ENCODE measurements at regions of chr16 and their contacts with region 1.

Region 1: DNA sequence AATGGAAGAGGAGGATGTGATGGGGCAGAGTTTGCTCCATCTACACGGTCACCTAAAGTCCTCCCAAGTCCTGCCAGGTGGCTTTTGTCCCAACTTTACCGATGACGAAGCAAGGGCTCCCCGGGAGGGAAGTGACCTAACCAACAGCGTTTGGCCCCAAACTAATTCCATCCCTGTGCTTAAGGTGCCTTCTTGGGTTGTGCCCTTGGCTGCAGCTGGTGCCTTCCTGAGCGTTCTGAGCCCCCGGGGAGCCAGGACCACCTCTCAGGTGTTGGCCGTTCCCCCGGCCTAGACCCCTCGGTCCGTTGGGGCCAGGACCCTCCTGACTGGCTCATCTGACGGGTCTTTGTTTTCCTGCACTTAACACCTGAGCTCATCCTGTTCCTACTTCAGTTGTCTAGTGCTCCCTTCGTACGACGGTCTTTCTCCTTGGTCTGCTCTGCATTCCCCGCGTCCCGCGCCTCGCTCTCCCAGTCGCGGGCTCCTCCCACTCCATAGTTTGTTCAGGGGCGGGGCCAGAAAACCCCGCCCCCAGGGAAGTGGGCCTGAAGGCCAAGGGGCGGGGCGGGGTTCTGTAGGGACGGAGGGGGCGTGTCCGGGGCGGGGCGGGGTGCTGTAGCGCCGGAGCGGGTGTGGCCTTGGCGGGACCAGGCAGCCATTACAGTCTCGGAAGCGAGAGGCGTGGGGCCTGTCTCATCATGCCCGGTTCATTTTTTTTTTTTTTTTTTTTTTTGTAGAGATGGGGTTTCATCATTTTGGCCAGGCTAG is 822 bp upstream of the ZSCAN10 start:
- DNase-seq: peak; percentile 86 to 96
- H3K4me3 ChIP-seq: peak overlapping the region; percentile 67 to 96 (median 88)
- H3K27ac ChIP-seq: peak overlapping the region; percentile 93
- H3K4me1 ChIP-seq: peaks cover 14 to 30% (median 16%) of the 10 kb centered on the region in 4 experiments
- H3K27me3 ChIP-seq: no peaks in the 10 kb centered on the region
- CTCF ChIP-seq: no peak
- EP300 ChIP-seq: no peak
- POLR2A ChIP-seq: peak; percentile 84 to 87
- RAD21 ChIP-seq: no peak

Region 2: GRCh38 chr16:2115591-2115973 is 984.3 kb before region 1 on chr16:
- CTCF ChIA-PET with region 1: no interaction called
- POLR2A ChIA-PET with region 1: no interaction called
- DNase-seq: no peak
- H3K4me3 ChIP-seq: no peak overlapping the region
- H3K27ac ChIP-seq: no peak overlapping the region
- H3K4me1 ChIP-seq: no peaks in the 10 kb centered on the region
- H3K27me3 ChIP-seq: no peaks in the 10 kb centered on the region
- CTCF ChIP-seq: no peak
- EP300 ChIP-seq: no peak
- POLR2A ChIP-seq: no peak
- RAD21 ChIP-seq: no peak

Region 3: GRCh38 chr16:3003582-3004302 is 96.2 kb before region 1 on chr16:
- CTCF ChIA-PET with region 1: no interaction called
- POLR2A ChIA-PET with region 1: interaction called, 26 read pairs
- DNase-seq: peak; percentile 95 to 98
- H3K4me3 ChIP-seq: peak overlapping the region in 1 of 4 experiments; percentile 58; a peak in 1 of 8 replicates
- H3K27ac ChIP-seq: no peak overlapping the region
- H3K4me1 ChIP-seq: peaks cover 11 to 33% (median 27%) of the 10 kb centered on the region in 4 experiments
- H3K27me3 ChIP-seq: no peaks in the 10 kb centered on the region
- CTCF ChIP-seq: peak; percentile 63 to 93 (median 71)
- EP300 ChIP-seq: peak in 1 of 2 experiments; percentile 36; a peak in 1 of 3 replicates
- POLR2A ChIP-seq: 0 out of 3 replicates have a peak, but pooled peaks of 1 of the 2 experiments have one; percentile 32
- RAD21 ChIP-seq: peak; percentile 85 to 92

Region 4: DNA sequence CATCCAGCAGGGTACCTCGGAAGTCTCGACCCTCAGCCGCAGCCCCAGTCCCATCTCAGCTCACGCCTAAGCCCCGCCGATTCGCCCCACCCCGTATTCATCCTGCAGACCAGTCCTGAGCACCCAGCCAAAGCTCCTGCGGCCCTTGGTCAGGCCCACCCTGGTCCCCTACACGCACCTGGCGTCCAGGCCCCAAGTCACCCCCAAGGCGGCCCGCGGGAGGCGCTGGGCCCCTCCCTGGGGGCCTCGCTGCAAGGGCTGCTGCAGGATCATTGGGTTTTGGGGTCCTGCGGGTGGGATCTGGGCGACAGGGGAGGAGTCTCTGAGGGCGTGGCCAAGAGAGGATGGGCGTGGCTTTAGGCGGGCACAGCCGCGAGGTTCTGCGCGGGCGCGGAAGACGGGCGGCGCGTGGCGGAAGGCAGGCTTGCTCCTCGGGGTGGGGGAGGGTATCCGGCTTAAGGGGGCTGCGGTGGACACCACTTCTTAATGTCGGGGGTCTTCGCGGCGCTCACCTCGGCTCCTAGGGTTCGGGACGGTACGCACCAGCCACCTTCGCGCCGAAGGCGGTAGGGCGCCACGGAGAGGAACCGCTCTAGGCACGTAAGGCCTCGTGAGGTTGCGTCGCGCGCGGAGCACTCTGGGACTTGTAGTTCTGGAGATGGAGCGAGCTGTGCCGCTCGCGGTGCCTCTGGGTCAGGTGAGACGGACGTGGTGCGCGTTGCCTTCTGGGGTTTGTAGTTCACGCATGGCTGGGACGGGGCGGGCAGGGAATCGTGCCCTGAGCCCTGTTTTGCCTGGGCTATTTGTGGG is 76.0 kb before region 1 on chr16 and contains the starts of genes HCFC1R1 and THOC6:
- CTCF ChIA-PET with region 1: interaction called, 8 read pairs
- POLR2A ChIA-PET with region 1: interaction called, 76 read pairs
- DNase-seq: peak; percentile 97 to 98
- H3K4me3 ChIP-seq: peak within 1 kb of the TSS; percentile 39 to 97 (median 94)
- H3K27ac ChIP-seq: peak within 1 kb of the TSS; percentile 94
- H3K4me1 ChIP-seq: peaks cover 0 to 23% (median 20%) of the 10 kb centered on the region in 4 experiments; a peak in 6 of 7 replicates
- H3K27me3 ChIP-seq: no peaks in the 10 kb centered on the region
- CTCF ChIP-seq: no peak
- EP300 ChIP-seq: no peak
- POLR2A ChIP-seq: peak; percentile 86 to 89
- RAD21 ChIP-seq: peak in 1 of 2 experiments; percentile 2; a peak in 2 of 4 replicates
- total RNA-seq, gene HCFC1R1: 66.2 and 72.7 TPM in 2 replicates
- total RNA-seq, gene THOC6: 78.5 and 82.9 TPM in 2 replicates

Region 5: GRCh38 chr16:3045357-3045728 is 54.6 kb before region 1 on chr16:
- CTCF ChIA-PET with region 1: interaction called, 3 read pairs
- POLR2A ChIA-PET with region 1: interaction called, 37 read pairs
- DNase-seq: peak in 1 of 2 experiments; percentile 73
- H3K4me3 ChIP-seq: peak overlapping the region; percentile 66 to 89 (median 80)
- H3K27ac ChIP-seq: no peak overlapping the region; the same call in 1 of the 2 replicates
- H3K4me1 ChIP-seq: peaks cover 0 to 3% (median 0%) of the 10 kb centered on the region in 4 experiments; a peak in 3 of 7 replicates
- H3K27me3 ChIP-seq: peaks cover 0 to 8% (median 3%) of the 10 kb centered on the region in 4 experiments; a peak in 6 of 7 replicates
- CTCF ChIP-seq: no peak
- EP300 ChIP-seq: no peak
- POLR2A ChIP-seq: no peak
- RAD21 ChIP-seq: no peak

Region 6: DNA sequence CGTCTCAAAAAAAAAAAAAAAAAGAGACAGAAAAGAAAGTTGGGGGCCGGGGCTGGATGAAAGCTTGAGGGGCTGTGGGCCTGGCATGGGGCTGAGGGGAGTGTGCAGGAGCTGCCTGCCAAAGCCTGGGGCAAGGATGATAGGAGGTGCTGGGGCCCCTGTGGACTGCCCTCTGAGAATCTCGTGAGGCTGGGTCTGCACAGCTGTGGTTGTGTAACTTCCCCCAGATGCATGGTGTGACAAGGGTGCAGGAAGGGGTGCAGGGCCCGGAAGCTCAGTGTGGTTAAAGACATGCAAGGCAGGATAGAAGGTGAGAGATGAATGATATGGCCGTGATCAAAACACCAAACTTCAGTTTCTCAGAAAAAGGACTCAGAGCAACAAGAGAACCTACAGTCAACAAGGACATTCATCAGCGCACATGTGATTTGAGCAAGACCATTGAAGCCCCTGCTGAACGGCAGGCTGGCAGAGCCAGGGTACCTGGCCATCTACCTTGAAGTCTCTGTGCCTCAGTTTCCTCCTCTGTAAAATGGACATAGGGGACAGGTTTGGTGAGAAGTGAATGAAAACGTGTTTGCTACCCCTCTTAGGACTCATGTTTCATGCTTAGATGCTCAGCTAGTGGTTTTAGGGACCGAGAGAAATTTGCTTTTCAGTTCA is 24.9 kb before region 1 on chr16:
- CTCF ChIA-PET with region 1: interaction called, 13 read pairs
- POLR2A ChIA-PET with region 1: interaction called, 47 read pairs
- DNase-seq: no peak
- H3K4me3 ChIP-seq: no peak overlapping the region
- H3K27ac ChIP-seq: no peak overlapping the region
- H3K4me1 ChIP-seq: peaks cover 0 to 2% (median 0%) of the 10 kb centered on the region in 4 experiments; a peak in 2 of 7 replicates
- H3K27me3 ChIP-seq: no peaks in the 10 kb centered on the region; a peak in 1 of 7 replicates
- CTCF ChIP-seq: no peak
- EP300 ChIP-seq: no peak
- POLR2A ChIP-seq: no peak
- RAD21 ChIP-seq: no peak

Region 7: GRCh38 chr16:3123986-3124886 is 24.3 kb after region 1 on chr16:
- CTCF ChIA-PET with region 1: interaction called, 619 read pairs
- POLR2A ChIA-PET with region 1: interaction called, 168 read pairs
- DNase-seq: peak; percentile 87 to 98
- H3K4me3 ChIP-seq: peak overlapping the region; percentile 43 to 76 (median 67)
- H3K27ac ChIP-seq: no peak overlapping the region
- H3K4me1 ChIP-seq: peaks cover 0 to 11% (median 4%) of the 10 kb centered on the region in 4 experiments; a peak in 5 of 7 replicates
- H3K27me3 ChIP-seq: no peaks in the 10 kb centered on the region
- CTCF ChIP-seq: peak; percentile 10 to 16 (median 11); a peak in 3 of 4 replicates
- EP300 ChIP-seq: no peak
- POLR2A ChIP-seq: peak in 1 of 2 experiments; percentile 71; a peak in 1 of 3 replicates
- RAD21 ChIP-seq: peak in 1 of 2 experiments; percentile 21; a peak in 1 of 4 replicates

Region 8: GRCh38 chr16:3173892-3174617 is 74.1 kb after region 1 on chr16:
- CTCF ChIA-PET with region 1: no interaction called
- POLR2A ChIA-PET with region 1: interaction called, 15 read pairs
- DNase-seq: peak in 1 of 2 experiments; percentile 95
- H3K4me3 ChIP-seq: peak overlapping the region; percentile 28 to 71 (median 34); a peak in 5 of 8 replicates
- H3K27ac ChIP-seq: no peak overlapping the region
- H3K4me1 ChIP-seq: peaks cover 0 to 10% (median 6%) of the 10 kb centered on the region in 4 experiments; a peak in 5 of 7 replicates
- H3K27me3 ChIP-seq: peaks cover 0 to 25% (median 15%) of the 10 kb centered on the region in 4 experiments; a peak in 5 of 7 replicates
- CTCF ChIP-seq: peak; percentile 63 to 75 (median 72)
- EP300 ChIP-seq: no peak
- POLR2A ChIP-seq: no peak
- RAD21 ChIP-seq: no peak; a peak in 1 of 4 replicates

Measured in H1 (cell line).